AG04449 (cell line): ENCODE measurements at regions of chr2 and their contacts with region 1.

Region 1: GRCh38 chr2:12096051-12096787 is 349.8 kb downstream of the LPIN1 start:
- DNase-seq: no peak
- H3K4me3 ChIP-seq: no peak overlapping the region
- CTCF ChIP-seq: no peak

Region 2: DNA sequence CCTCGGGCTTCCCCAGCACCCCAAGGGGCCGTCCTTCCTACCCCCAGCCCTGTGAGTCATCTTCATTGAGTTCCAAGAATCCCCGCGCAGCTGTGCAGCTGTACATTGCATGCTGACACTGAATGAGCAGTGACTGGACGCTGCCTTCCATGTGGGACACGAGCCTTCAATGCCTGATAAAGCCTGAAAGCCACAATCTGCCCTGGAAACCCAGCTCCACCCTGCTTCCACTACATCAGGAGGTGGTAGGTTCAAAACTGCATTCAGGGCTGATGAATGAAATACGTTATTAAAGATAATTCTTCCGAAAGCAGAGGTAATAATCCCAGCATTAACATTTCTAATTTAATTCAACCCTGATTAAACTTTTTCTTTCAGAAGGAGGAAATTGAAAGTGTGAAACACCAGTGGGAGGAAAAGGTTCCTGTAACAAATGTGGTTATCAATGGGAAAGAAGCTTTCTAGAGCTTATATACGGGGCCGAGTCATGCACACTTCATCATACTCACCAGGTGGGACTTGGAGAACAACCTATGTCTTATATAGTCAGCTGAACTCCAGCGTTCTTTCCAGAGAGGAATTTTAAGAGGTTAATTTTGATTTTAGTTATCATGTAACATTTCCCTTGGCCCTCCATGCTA is 10.3 kb after region 1 on chr2:
- CTCF ChIA-PET with region 1: interaction called, 10 read pairs
- POLR2A ChIA-PET with region 1: no interaction called
- DNase-seq: peak; percentile 95
- H3K4me3 ChIP-seq: no peak overlapping the region
- CTCF ChIP-seq: no peak